ENCODE measurements at regions of chr18 and their contacts with region 1.

Region 1: DNA sequence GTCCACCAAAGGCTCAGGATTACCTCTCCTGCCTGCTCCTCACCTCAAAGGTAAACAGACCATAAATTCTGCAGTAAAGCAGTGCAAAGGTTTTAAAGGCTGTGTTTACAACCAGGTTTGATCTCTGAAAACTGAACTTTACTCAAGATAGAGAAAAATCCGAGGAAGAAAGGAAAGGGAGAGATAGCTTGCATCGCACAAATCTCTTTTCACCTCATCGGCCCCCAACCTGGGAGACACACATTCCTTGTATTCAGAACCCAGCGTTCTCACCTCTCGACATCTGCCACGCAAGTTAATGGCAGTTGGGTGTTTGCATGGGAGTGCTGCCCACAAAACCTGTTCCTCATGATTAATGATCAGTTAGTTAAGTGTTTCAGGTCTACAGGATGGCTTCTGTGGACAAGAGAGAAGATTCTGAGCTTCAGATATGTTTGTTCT is 72.6 kb downstream of the GATA6 start:
- DNase-seq: no peak
- H3K4me3 Mint-ChIP-seq: no peak overlapping the region
- H3K27ac Mint-ChIP-seq: no peak overlapping the region
- H3K4me1 Mint-ChIP-seq: no peaks in the 10 kb centered on the region
- H3K27me3 Mint-ChIP-seq: no peaks in the 10 kb centered on the region

Region 2: GRCh38 chr18:22348521-22349316 is 106.8 kb after region 1 on chr18:
- intact Hi-C with region 1: loop called (anchors 5 kb)
- DNase-seq: no peak
- H3K4me3 Mint-ChIP-seq: no peak overlapping the region
- H3K27ac Mint-ChIP-seq: no peak overlapping the region
- H3K4me1 Mint-ChIP-seq: peaks cover 3% of the 10 kb centered on the region
- H3K27me3 Mint-ChIP-seq: peaks cover 49% of the 10 kb centered on the region